ENCODE measurements at regions of chr12 and their contacts with region 1.

Region 1: GRCh38 chr12:90959538-90960139 is 4.7 kb upstream of the CCER1 start:
- DNase-seq: peak; percentile 43
- H3K4me3 ChIP-seq: no peak overlapping the region
- H3K27ac ChIP-seq: no peak overlapping the region
- H3K4me1 ChIP-seq: no peaks in the 10 kb centered on the region; a peak in 1 of 4 replicates
- H3K27me3 ChIP-seq: no peaks in the 10 kb centered on the region
- CTCF ChIP-seq: peak; percentile 77
- EP300 ChIP-seq: no peak
- RAD21 ChIP-seq: peak; percentile 77

Region 2: GRCh38 chr12:90519285-90519684 is 440.4 kb before region 1 on chr12:
- CTCF ChIA-PET with region 1: no interaction called
- POLR2A ChIA-PET with region 1: no interaction called
- DNase-seq: no peak
- H3K4me3 ChIP-seq: no peak overlapping the region
- H3K27ac ChIP-seq: no peak overlapping the region
- H3K4me1 ChIP-seq: peaks cover 0 to 3% of the 10 kb centered on the region in 2 experiments; a peak in 2 of 4 replicates
- H3K27me3 ChIP-seq: no peaks in the 10 kb centered on the region
- CTCF ChIP-seq: no peak
- EP300 ChIP-seq: no peak
- RAD21 ChIP-seq: no peak

Region 3: DNA sequence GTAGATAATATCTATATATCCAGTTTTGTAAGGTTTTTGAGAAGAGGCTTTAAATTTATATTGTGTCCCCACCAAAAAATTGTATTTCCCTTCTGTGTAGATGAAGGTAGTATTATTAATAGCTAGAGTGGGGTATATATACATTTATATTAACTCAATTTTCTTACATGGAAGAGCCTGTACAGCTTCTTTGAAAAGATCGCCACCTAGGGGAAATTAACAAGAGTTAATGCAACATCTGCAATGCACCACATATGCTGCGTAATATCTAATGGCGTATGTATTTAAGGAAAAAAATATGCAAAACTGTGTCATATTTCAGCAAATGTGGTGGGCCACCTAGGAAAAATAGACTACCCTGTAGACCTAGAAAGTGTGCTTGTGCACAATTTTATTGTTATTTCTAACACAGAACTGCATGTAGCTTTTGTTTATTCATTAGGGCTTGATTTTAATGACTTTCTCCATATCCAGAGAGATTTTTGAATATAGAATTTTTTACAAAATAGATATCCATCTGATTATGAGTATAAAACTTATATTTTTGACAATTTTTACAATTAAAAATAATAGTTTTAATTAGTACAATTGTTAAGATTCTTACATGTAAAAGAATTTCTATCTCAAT is 18.7 kb before region 1 on chr12:
- CTCF ChIA-PET with region 1: interaction called, 39 read pairs
- POLR2A ChIA-PET with region 1: no interaction called
- DNase-seq: peak; percentile 32
- H3K4me3 ChIP-seq: no peak overlapping the region
- H3K27ac ChIP-seq: no peak overlapping the region
- H3K4me1 ChIP-seq: peaks cover 0 to 15% of the 10 kb centered on the region in 2 experiments; a peak in 3 of 4 replicates
- H3K27me3 ChIP-seq: no peaks in the 10 kb centered on the region
- CTCF ChIP-seq: peak; percentile 84
- EP300 ChIP-seq: no peak
- RAD21 ChIP-seq: peak; percentile 81

Region 4: GRCh38 chr12:90970473-90970872 is 10.8 kb after region 1 on chr12:
- CTCF ChIA-PET with region 1: interaction called, 12 read pairs
- POLR2A ChIA-PET with region 1: no interaction called
- DNase-seq: no peak
- H3K4me3 ChIP-seq: no peak overlapping the region
- H3K27ac ChIP-seq: no peak overlapping the region
- H3K4me1 ChIP-seq: peaks cover 0 to 13% of the 10 kb centered on the region in 2 experiments; a peak in 3 of 4 replicates
- H3K27me3 ChIP-seq: no peaks in the 10 kb centered on the region
- CTCF ChIP-seq: no peak
- EP300 ChIP-seq: no peak
- RAD21 ChIP-seq: no peak

Region 5: DNA sequence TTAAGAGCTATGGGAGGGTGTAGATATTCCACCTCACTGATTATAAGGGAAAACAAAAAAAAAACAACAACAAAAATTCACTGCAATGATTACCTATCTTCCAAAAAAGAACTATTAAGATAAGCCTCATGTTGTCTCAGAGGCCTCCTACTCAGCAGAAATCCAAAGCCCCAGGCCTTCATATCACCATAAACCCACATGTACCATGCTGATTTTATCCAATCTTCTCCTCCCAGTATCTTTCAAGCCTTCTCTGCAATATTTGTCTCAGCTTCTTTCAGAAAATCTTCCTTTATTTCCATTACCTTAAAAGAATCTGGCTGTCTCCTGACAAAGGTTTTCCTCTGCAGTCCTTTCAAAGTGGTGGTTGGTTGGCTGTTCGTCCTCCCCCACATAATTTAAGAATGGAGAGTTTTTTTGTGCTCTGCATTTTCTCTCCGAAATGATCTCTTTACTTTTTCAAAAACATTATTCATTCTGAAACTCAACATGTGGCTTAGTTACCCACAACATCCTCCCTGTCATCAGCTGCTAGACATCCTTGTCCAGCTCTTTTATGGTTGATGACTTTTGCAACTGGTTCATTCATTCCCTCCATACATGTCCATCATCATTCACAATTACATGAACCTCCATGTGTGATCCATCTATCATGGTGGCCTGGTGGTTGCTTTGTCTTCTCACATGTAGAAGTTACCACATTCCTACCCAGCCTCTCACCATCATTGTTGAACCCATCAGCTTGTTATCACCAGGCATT is 48.1 kb after region 1 on chr12:
- CTCF ChIA-PET with region 1: no interaction called
- POLR2A ChIA-PET with region 1: no interaction called
- DNase-seq: no peak
- H3K4me3 ChIP-seq: no peak overlapping the region
- H3K27ac ChIP-seq: no peak overlapping the region
- H3K4me1 ChIP-seq: no peaks in the 10 kb centered on the region
- H3K27me3 ChIP-seq: no peaks in the 10 kb centered on the region
- CTCF ChIP-seq: no peak
- EP300 ChIP-seq: no peak
- RAD21 ChIP-seq: no peak